ENCODE measurements at regions of chr19 and their contacts with region 1.

Region 1: DNA sequence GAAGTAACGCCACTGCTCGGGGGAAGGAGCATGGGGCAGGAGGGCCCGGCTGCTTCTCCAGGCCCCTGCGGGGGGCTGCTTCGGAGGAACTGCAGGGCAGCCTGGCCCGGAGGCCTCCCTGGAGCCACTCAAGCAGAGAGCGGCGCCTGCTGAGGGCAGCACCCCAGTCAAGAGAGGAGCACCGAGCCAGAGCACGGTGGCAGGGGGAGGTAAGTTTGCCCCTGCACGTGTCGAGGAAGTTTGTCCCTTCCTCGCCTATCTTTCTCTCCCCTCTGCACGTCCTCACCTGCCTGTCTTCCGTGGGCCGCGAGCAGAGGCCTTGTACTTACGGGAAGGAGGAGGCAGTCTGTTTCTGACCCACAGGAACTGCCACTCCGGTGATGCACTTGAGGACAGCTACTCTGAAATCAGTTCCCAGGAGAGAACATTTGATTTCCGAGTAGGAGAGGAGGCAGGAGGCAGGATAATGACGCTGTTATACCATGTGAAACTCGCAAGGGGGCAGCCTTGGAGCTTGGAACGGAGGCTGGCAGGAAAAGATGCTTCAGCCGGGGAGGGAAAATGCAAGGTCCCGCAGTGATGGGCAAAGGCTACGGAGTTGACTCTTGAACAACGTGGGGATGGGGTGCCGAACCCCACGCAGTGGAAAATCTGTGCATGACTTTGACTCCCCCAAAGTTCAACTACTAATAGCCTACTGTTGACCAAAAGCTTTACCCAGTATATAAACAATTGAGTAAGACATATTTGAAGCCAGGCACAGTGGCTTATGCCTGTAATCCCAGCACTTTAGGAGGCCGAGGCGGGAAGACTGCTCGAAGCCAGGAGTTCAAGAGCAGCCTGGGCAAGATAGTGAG is 5.0 kb downstream of the FFAR1 start:
- DNase-seq: peak; percentile 64
- H3K4me3 ChIP-seq: no peak overlapping the region
- H3K27ac ChIP-seq: no peak overlapping the region
- H3K4me1 ChIP-seq: no peaks in the 10 kb centered on the region
- H3K27me3 ChIP-seq: no peaks in the 10 kb centered on the region
- CTCF ChIP-seq: peak in 3 of 4 experiments; percentile 63 to 82 (median 79)
- POLR2A ChIP-seq: no peak

Region 2: DNA sequence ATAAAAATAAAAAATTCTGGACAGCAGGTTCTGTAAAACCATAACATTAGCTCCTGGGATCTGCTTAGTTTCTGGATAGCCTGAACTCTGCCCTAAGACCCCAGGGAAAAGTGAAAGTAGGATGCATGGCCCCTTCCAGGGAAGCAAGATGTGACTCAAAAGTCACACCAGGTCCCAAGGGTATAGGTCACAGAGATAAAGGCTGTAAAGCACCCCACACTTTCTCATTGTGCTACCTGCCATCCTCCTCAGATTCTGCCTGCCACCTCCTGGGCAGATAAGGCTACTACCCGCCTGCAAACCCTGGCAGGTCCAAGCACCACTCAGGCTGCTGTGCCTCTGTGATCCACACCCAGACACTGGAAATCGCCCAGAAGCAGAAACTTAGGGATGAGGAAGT is 116.0 kb after region 1 on chr19:
- intact Hi-C with region 1: loop called (anchors 2 kb)
- DNase-seq: peak; percentile 51
- H3K4me3 ChIP-seq: no peak overlapping the region
- H3K27ac ChIP-seq: no peak overlapping the region
- H3K4me1 ChIP-seq: no peaks in the 10 kb centered on the region
- H3K27me3 ChIP-seq: no peaks in the 10 kb centered on the region
- CTCF ChIP-seq: peak; percentile 22 to 81 (median 63)
- POLR2A ChIP-seq: no peak

Region 3: DNA sequence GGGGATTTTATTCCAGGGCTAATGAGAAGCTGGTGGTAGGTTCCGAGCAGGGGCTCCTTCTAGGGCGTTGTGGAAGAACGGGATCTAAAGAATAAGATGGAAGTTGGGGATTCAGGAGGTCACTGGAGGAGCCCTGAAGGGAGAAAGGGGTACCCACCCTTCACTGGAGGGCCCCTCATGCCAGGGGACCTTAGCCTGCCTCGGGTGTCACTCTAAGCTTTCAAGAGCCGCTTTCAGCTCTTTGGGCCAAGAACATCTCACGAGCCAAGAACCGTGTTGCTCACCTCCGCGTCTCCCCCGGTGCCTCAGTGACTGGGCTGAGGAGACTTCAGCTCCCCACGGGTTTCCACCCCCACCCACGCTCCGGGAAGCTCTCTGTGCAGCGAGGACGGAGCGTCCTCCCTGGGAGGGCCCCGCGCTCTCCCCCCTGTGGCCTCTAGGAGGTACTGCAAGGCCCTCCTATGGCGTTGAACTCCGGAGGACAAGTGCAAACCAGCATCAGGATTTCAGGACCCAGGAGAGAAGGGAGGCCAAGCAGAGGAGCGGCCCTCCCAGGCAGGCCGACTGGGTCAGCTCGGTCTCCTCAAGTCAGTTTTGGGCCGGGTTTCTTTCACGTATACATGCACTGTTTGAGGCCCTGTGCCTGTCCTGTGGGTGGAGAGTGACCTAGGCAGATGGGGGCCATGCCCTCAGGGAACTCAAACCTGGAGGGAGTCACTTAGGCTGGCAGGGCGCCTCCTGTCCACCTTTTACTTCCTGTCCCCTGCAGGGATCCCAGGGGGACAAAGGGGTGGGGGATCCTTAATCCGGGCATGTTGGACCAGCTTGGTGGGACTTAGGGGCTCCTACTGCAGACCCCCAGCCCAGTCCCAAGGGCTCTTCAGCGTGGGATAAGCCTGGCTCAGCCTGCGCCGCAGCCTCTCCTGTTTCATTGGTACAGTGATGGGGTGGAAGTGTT is 142.7 kb after region 1 on chr19:
- intact Hi-C with region 1: loop called (anchors 5 kb)
- DNase-seq: peak; percentile 32
- H3K4me3 ChIP-seq: no peak overlapping the region
- H3K27ac ChIP-seq: no peak overlapping the region
- H3K4me1 ChIP-seq: no peaks in the 10 kb centered on the region
- H3K27me3 ChIP-seq: no peaks in the 10 kb centered on the region
- CTCF ChIP-seq: peak; percentile 75 to 91 (median 83)
- POLR2A ChIP-seq: no peak

Region 4: DNA sequence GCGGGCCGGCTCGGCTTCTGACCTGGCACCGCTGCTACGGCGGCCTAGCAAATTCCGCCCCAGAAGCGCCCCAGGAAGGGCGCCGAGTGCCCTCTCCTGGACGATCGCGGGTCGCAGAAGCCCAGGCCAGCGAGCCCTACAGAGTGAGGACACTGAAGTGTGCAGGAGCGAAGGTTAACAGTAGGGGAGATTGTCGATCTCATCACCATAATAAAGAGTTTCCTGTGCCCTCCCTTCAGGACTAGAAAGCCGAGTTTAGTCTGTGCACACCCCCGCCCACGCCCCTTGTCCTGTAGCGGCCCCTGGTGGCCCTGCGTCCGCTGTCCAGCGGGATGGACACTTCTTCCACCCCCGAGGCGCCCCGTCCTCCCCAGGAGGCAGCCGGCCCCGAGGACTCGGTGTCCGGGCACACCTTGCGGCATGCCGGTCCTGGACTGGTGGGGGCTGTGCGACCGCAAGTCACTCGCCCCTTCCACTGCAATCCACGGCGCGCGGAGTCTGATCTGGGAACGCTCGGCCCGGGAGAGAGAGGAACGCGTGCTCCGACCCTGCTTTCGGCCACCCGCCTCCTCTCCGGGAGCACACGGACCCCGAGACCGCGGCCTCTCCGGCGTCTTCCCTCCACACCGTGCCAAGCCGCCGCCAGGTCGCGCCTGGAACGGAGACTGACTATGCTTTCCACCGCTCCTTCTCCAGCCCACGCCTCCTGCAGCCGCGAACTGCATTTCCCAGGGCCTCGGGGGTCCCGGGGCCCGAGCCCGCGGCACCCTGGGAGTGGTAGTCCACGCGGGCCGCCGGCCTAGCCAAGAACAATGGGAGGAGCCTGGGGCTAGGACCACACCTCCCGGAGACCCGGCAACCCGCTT is 364.4 kb after region 1 on chr19:
- intact Hi-C with region 1: loop called (anchors 10 kb)
- DNase-seq: peak; percentile 95
- H3K4me3 ChIP-seq: peak overlapping the region; percentile 91 to 93
- H3K27ac ChIP-seq: peak overlapping the region; percentile 69 to 91
- H3K4me1 ChIP-seq: peaks cover 15% of the 10 kb centered on the region
- H3K27me3 ChIP-seq: no peaks in the 10 kb centered on the region
- CTCF ChIP-seq: peak; percentile 76 to 96 (median 90)
- POLR2A ChIP-seq: peak; percentile 22

Region 5: DNA sequence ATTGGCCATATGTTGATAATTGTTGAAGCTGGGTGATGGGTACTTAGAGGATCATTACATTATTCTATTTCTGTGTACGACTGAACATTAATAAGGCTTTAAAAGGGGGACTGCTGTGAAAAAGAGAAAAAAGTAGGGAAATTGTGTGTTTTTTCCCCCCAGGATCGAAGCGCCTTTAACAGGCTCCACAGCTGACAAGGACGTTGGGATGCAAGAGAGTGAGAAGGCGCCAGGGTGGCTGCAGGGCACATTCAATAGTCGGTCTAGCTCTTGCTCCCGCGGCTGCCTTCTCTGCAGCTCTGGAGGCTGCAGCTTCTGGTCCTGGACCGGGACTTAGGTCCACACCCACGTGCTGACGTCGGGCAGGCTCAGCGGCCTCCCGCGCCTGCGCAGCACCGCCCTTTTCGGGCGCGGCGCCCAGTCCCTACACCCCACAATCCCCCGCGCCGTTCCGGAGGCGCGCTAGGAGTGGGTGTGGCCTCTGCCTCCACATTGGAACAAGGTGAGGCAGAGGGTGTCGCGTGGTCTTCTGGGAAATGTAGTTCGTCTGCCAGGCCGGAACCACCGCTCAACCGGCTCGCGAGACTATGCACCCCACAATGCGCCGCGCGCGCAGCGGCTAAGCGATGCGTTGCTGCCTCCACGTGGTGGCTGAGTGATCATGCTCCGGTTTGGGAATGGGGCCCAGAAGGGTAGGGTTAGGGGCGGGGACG is 578.6 kb after region 1 on chr19:
- intact Hi-C with region 1: no loop called
- DNase-seq: peak; percentile 99
- H3K4me3 ChIP-seq: peak overlapping the region in 1 of 2 donors; percentile 20
- H3K27ac ChIP-seq: peak overlapping the region; percentile 70 to 71
- H3K4me1 ChIP-seq: no peaks in the 10 kb centered on the region
- H3K27me3 ChIP-seq: no peaks in the 10 kb centered on the region
- CTCF ChIP-seq: peak; percentile 87 to 99 (median 92)
- POLR2A ChIP-seq: peak; percentile 89